Endothelial cell of umbilical vein (primary cell): ENCODE measurements at regions of chr10 and their contacts with region 1.

Region 1: GRCh38 chr10:86360657-86361056 is 5.9 kb downstream of the GRID1 start:
- DNase-seq: no peak
- H3K4me3 ChIP-seq: no peak overlapping the region
- H3K27ac ChIP-seq: no peak overlapping the region
- H3K4me1 ChIP-seq: no peaks in the 10 kb centered on the region
- H3K27me3 ChIP-seq: peaks cover 37 to 39% of the 10 kb centered on the region in 2 experiments
- CTCF ChIP-seq: no peak
- POLR2A ChIP-seq: no peak

Region 2: GRCh38 chr10:86110156-86110786 is 250.4 kb before region 1 on chr10:
- CTCF ChIA-PET with region 1: no interaction called
- POLR2A ChIA-PET with region 1: no interaction called
- dilution Hi-C with region 1: no loop called
- intact Hi-C with region 1: no loop called
- DNase-seq: no peak
- H3K4me3 ChIP-seq: no peak overlapping the region
- H3K27ac ChIP-seq: no peak overlapping the region
- H3K4me1 ChIP-seq: no peaks in the 10 kb centered on the region
- H3K27me3 ChIP-seq: no peaks in the 10 kb centered on the region
- CTCF ChIP-seq: no peak
- POLR2A ChIP-seq: no peak

Region 3: GRCh38 chr10:86170255-86171108 is 190.2 kb before region 1 on chr10:
- CTCF ChIA-PET with region 1: no interaction called
- POLR2A ChIA-PET with region 1: no interaction called
- dilution Hi-C with region 1: no loop called
- intact Hi-C with region 1: no loop called
- DNase-seq: no peak
- H3K4me3 ChIP-seq: no peak overlapping the region
- H3K27ac ChIP-seq: no peak overlapping the region
- H3K4me1 ChIP-seq: no peaks in the 10 kb centered on the region
- H3K27me3 ChIP-seq: no peaks in the 10 kb centered on the region
- CTCF ChIP-seq: no peak
- POLR2A ChIP-seq: no peak

Region 4: GRCh38 chr10:86321568-86321967 is 39.1 kb before region 1 on chr10:
- CTCF ChIA-PET with region 1: no interaction called
- POLR2A ChIA-PET with region 1: no interaction called
- dilution Hi-C with region 1: no loop called
- intact Hi-C with region 1: loop called (anchors 1 kb)
- DNase-seq: no peak
- H3K4me3 ChIP-seq: no peak overlapping the region
- H3K27ac ChIP-seq: no peak overlapping the region
- H3K4me1 ChIP-seq: no peaks in the 10 kb centered on the region
- H3K27me3 ChIP-seq: no peaks in the 10 kb centered on the region
- CTCF ChIP-seq: no peak
- POLR2A ChIP-seq: no peak

Region 5: DNA sequence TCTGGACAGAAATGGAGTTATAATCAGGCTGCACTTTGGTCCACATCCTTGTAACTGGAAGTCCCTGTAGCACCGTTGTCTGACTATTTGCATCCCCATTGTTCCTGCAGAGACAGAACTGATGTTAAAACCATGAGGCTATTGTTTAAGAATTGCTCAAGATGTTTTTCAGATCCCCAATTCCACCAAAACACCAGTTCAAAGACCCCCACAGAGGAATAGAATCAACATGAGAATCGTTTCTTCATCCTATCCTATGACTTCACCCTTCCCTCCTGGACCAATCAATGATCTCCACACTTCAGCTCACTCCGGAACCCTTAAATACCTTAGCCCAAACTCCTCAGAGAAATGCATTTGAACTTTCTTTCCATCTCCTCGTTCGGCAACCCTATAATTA is 63.1 kb after region 1 on chr10:
- CTCF ChIA-PET with region 1: no interaction called
- POLR2A ChIA-PET with region 1: no interaction called
- dilution Hi-C with region 1: no loop called
- intact Hi-C with region 1: no loop called
- DNase-seq: no peak
- H3K4me3 ChIP-seq: no peak overlapping the region
- H3K27ac ChIP-seq: no peak overlapping the region
- H3K4me1 ChIP-seq: no peaks in the 10 kb centered on the region
- H3K27me3 ChIP-seq: peaks cover 3 to 6% of the 10 kb centered on the region in 2 experiments
- CTCF ChIP-seq: no peak
- POLR2A ChIP-seq: no peak